ENCODE measurements at regions of chr3 and their contacts with region 1.

Region 1: GRCh38 chr3:193357291-193357690 is 21.3 kb downstream of the ATP13A5 start:
- DNase-seq: no peak
- ATAC-seq: no peak
- H3K4me3 ChIP-seq: no peak overlapping the region
- H3K27ac ChIP-seq: no peak overlapping the region
- H3K4me1 ChIP-seq: peaks cover 0 to under 1% (median 0%) of the 10 kb centered on the region in 9 donors
- H3K27me3 ChIP-seq: peaks cover 0 to 2% (median 0%) of the 10 kb centered on the region in 7 donors
- CTCF ChIP-seq: no peak

Region 2: GRCh38 chr3:191531434-191531972 is 1825.8 kb before region 1 on chr3:
- intact Hi-C with region 1: loop called in 1 of 10 experiments (anchors 5 kb)
- DNase-seq: no peak
- ATAC-seq: no peak
- H3K4me3 ChIP-seq: no peak overlapping the region
- H3K27ac ChIP-seq: no peak overlapping the region
- H3K4me1 ChIP-seq: peaks cover 0 to 2% (median 0%) of the 10 kb centered on the region in 9 donors
- H3K27me3 ChIP-seq: no peaks in the 10 kb centered on the region
- CTCF ChIP-seq: no peak

Region 3: GRCh38 chr3:193194371-193194770 is 162.9 kb before region 1 on chr3:
- intact Hi-C with region 1: no loop called
- DNase-seq: no peak
- ATAC-seq: no peak
- H3K4me3 ChIP-seq: no peak overlapping the region
- H3K27ac ChIP-seq: no peak overlapping the region
- H3K4me1 ChIP-seq: peaks cover 0 to 3% (median 0%) of the 10 kb centered on the region in 9 donors
- H3K27me3 ChIP-seq: no peaks in the 10 kb centered on the region
- CTCF ChIP-seq: no peak